ENCODE measurements at regions of chr14 and their contacts with region 1.

Region 1: GRCh38 chr14:90758028-90758889 is 58.0 kb downstream of the TTC7B start:
- DNase-seq: peak; percentile 96
- H3K4me3 Mint-ChIP-seq: peak overlapping the region; percentile 70
- H3K27ac Mint-ChIP-seq: peak overlapping the region; percentile 78
- H3K4me1 Mint-ChIP-seq: peaks cover 20% of the 10 kb centered on the region
- H3K27me3 Mint-ChIP-seq: peaks cover 3% of the 10 kb centered on the region

Region 2: GRCh38 chr14:90383075-90383730 is 375.1 kb before region 1 on chr14:
- CTCF ChIA-PET with region 1: interaction called, 8 read pairs
- POLR2A ChIA-PET with region 1: interaction called, 12 read pairs
- DNase-seq: peak; percentile 99
- H3K4me3 Mint-ChIP-seq: no peak overlapping the region
- H3K27ac Mint-ChIP-seq: no peak overlapping the region
- H3K4me1 Mint-ChIP-seq: peaks cover 20% of the 10 kb centered on the region
- H3K27me3 Mint-ChIP-seq: no peaks in the 10 kb centered on the region

Region 3: DNA sequence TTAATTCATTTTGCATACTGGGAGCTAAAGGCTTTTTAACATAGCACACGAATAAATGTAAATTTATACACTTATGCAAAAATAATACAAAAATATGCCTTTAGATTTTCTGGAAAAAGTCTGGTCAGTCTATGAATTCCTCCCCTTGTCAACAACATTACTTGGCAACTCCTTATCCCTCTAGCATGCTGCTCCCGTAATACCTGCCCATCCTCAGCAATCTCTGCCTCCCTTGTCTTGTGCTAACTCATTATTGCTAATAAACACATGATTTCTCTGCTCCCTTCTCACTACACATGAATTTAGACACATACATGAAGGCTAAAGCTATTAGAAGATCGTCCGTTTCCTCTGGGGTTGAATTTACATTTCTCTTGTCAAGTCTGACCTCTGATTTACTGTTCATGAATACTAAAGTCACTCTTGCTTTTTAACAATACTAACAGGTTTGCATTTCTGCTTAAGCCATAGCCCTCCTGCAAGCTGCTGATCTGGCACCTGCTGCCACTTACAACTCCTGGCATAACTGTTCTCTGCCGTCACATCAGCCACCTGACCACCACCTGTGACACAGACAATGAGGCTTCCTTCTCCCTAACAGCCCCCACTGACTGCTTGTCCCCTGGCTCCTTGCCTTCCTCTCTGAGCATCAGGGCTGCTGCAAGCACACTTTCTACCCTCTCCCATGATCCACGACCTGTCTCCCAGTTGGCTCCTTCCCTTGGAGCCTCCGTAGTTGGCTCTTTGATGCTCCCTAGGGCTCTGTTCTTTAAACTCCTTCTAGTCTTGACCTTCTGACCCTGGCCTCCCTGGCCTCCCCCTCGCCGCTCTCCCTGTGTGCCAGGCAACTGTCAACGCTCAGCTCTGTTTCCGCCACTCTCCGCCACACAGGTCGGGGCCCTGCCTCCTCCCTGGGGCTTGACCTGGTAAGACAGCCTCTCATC is 183.8 kb before region 1 on chr14:
- CTCF ChIA-PET with region 1: no interaction called
- POLR2A ChIA-PET with region 1: no interaction called
- DNase-seq: no peak
- H3K4me3 Mint-ChIP-seq: no peak overlapping the region
- H3K27ac Mint-ChIP-seq: no peak overlapping the region
- H3K4me1 Mint-ChIP-seq: no peaks in the 10 kb centered on the region
- H3K27me3 Mint-ChIP-seq: no peaks in the 10 kb centered on the region

Region 4: DNA sequence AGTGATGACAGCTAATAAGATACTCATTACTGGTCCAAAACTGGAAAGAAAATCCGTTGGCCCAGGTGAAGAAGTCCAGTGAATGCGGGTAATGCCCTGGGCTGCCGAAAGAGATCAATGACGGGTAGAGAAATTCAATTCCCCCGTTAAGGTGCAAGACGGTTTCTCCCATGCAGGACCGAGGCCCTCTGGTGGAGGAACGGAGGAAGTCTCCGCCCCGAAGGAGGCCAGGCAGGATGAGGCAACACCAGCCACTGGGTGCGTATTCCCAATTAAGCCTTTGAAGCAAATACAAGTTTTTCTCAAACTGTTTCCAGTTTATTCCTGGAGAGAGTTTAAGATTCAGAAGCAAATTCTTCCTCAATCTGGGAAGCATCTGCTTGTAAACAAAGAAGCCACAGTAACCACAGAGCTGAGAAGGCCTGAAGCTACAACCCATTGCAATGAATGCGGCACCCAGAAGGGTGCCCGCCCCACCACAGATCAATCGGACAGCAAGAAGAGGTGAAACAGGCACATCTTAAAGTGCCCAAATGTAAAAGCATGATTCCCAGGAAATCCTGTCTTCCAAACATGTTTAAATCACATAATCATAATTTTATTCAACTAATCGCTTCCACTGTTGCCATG is 60.6 kb before region 1 on chr14:
- CTCF ChIA-PET with region 1: interaction called, 25 read pairs
- POLR2A ChIA-PET with region 1: no interaction called
- DNase-seq: peak; percentile 77
- H3K4me3 Mint-ChIP-seq: no peak overlapping the region
- H3K27ac Mint-ChIP-seq: no peak overlapping the region
- H3K4me1 Mint-ChIP-seq: peaks cover 8% of the 10 kb centered on the region
- H3K27me3 Mint-ChIP-seq: no peaks in the 10 kb centered on the region

Region 5: GRCh38 chr14:90743425-90743824 is 14.8 kb before region 1 on chr14:
- CTCF ChIA-PET with region 1: interaction called, 10 read pairs
- POLR2A ChIA-PET with region 1: interaction called, 7 read pairs
- DNase-seq: no peak
- H3K4me3 Mint-ChIP-seq: no peak overlapping the region
- H3K27ac Mint-ChIP-seq: no peak overlapping the region
- H3K4me1 Mint-ChIP-seq: no peaks in the 10 kb centered on the region
- H3K27me3 Mint-ChIP-seq: peaks cover 6% of the 10 kb centered on the region

Region 6: GRCh38 chr14:90774316-90774715 is 16.1 kb after region 1 on chr14:
- CTCF ChIA-PET with region 1: interaction called, 51 read pairs
- POLR2A ChIA-PET with region 1: interaction called, 11 read pairs
- DNase-seq: no peak
- H3K4me3 Mint-ChIP-seq: no peak overlapping the region
- H3K27ac Mint-ChIP-seq: no peak overlapping the region
- H3K4me1 Mint-ChIP-seq: no peaks in the 10 kb centered on the region
- H3K27me3 Mint-ChIP-seq: no peaks in the 10 kb centered on the region

Region 7: GRCh38 chr14:90820958-90821357 is 62.7 kb after region 1 on chr14:
- CTCF ChIA-PET with region 1: interaction called, 5 read pairs
- POLR2A ChIA-PET with region 1: interaction called, 10 read pairs
- DNase-seq: peak; percentile 82
- H3K4me3 Mint-ChIP-seq: no peak overlapping the region
- H3K27ac Mint-ChIP-seq: no peak overlapping the region
- H3K4me1 Mint-ChIP-seq: peaks cover 15% of the 10 kb centered on the region
- H3K27me3 Mint-ChIP-seq: peaks cover 11% of the 10 kb centered on the region

Measured in activated CD4-positive, alpha-beta memory T cell treated with anti-CD3 and anti-CD28 coated beads, Interleukin-2, amount 10 ng/mL, durations not matched to agents 7 days and 5 days (primary cell).